ENCODE measurements at regions of chr4 and their contacts with region 1.

Region 1: GRCh38 chr4:153318696-153319320 is 25.7 kb upstream of the MND1 start:
- DNase-seq: no peak
- ATAC-seq: peak in 3 of 4 donors; percentile 74 to 77 (median 77)
- H3K4me3 ChIP-seq: no peak overlapping the region
- H3K27ac ChIP-seq: no peak overlapping the region
- H3K4me1 ChIP-seq: no peaks in the 10 kb centered on the region
- H3K27me3 ChIP-seq: no peaks in the 10 kb centered on the region
- CTCF ChIP-seq: peak; percentile 53 to 81 (median 74)
- POLR2A ChIP-seq: no peak

Region 2: DNA sequence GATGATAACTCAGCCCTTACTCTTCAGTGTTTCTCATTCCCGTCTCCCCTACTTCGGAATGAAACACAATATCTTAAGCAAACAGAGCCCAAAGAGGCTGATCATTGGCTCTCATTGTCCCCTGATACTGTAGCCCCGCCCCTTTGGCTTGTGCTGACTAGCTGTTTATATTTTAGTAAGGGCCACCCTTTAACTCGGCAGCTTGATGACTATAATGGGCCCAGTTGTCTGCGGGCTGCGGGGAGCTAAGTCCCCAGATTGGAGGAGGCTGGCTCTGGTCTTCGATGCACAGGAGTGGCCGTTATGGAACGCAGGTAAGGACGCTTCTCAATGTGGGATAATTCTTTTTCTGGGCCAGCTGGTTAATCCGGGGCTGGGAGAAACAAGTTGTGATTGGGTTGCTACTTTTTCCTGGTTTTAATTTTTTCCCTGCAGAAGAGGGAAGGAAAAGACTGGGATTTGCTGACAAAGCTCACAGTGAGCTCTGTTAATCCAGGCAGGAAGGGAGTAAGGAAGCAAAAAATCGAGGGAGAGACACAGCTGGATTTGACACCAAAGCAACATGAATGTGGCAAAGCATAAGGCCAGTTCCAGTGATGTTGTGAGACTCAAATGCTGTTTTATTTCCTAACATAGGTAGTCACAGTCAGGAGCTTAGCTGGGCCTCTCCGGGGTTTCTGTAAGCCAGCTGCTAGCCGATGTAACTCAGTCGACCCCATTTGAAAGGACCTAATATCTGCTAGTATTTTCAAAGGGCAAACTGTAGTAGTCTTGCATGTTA is 114.4 kb before region 1 on chr4 and contains the start of gene TRIM2:
- intact Hi-C with region 1: loop called (anchors 2 to 10 kb)
- DNase-seq: peak; percentile 67 to 82 (median 72)
- ATAC-seq: peak; percentile 84 to 95 (median 87)
- H3K4me3 ChIP-seq: peak within 1 kb of the TSS in 11 of 12 donors; percentile 3 to 60 (median 40)
- H3K27ac ChIP-seq: peak within 1 kb of the TSS in 6 of 12 donors; percentile 10 to 63 (median 36)
- H3K4me1 ChIP-seq: peaks cover 0 to 14% (median 0%) of the 10 kb centered on the region in 12 donors
- H3K27me3 ChIP-seq: no peaks in the 10 kb centered on the region
- CTCF ChIP-seq: no peak
- POLR2A ChIP-seq: peak in 1 of 2 donors; percentile 50
- total RNA-seq, gene TRIM2: 13.0 to 30.5 (median 19.0) TPM

Region 3: DNA sequence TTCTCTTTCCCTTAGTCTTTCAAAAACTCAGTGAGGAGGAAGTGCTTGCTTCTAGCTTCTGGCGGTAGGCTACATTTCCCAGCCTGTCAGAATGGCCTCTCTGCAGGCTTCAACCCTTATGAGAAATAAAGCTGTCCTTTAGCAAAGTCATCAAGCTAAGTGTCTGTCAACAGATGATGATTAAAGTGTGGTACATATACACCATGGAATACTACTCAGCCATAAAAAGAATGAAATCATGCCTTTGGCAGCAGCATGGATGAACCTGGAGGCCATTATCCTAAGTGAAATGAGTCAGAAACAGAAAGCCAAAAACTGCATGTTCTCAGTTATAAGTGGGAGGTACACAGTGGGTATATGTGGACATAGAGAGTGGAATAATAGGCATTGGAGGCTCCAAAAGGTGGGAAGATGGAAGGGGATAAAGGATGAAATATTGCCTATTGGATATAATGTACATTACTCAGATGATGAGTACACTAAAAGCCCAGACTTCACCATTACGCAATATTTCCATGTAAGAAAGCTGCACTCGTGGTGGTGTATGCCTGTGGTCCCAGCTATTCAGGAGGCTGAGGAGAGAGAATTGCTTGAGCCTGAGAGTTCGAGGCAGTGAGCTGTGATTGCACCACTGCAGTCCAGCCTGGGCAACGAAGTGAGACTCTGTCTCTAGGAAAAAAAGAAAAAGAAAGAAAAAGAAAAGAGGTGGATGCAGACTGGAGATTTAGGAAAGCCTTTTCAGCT is 106.7 kb before region 1 on chr4:
- intact Hi-C with region 1: loop called (anchors 2 to 10 kb)
- DNase-seq: no peak
- ATAC-seq: no peak
- H3K4me3 ChIP-seq: no peak overlapping the region
- H3K27ac ChIP-seq: no peak overlapping the region
- H3K4me1 ChIP-seq: peaks cover 0 to 41% (median 8%) of the 10 kb centered on the region in 12 donors
- H3K27me3 ChIP-seq: no peaks in the 10 kb centered on the region
- CTCF ChIP-seq: no peak
- POLR2A ChIP-seq: no peak

Region 4: DNA sequence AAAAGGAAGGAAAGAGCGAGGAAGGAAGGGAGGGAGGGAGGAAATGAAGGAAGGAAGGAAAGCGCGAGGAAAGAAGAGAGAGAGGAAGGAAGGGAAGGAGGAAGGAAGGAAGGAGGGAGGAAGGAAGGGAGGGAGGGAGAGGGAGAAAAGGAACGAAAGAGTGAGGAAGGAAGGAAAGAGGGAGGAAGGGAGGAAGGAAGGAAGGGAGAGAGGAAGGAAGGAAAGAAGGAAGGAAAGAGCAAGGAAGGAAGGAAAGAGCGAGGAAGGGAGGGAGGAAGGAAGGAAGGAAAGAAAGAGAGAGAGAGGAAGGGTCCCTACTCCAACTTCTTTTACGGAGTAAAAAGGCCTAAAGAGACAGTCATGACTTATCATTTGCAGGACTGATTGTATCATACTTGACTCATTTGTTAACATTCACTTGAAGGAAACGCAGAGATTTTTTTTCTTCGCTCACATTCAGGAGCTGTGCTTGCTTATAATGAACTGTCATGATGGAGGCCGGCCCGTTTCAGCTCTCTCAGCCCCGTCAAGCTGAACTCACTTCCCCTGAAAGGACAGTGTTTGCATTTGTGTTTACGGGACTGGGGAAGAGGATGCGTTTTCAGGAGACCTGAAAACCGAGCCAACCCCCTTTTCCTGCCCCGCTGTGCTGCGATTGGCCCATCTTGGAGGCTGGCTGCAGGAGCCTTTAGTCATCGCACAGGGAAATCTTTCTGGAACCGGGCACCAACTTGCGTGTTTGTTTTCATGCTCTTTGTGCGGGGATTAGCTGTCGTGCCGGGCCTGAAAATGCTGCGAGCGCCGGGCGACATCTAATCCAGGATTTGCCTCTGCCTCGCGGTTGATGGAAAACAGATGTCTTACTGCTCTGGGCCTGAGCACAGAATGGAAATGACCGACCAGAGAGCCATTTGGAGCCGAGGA is 96.8 kb before region 1 on chr4:
- intact Hi-C with region 1: loop called in 1 of 10 experiments (anchors 5 kb)
- DNase-seq: peak; percentile 36 to 76 (median 62)
- ATAC-seq: peak; percentile 34 to 74 (median 66)
- H3K4me3 ChIP-seq: peak overlapping the region; percentile 53 to 90 (median 76)
- H3K27ac ChIP-seq: peak overlapping the region; percentile 86 to 97 (median 92)
- H3K4me1 ChIP-seq: peaks cover 0 to 47% (median 15%) of the 10 kb centered on the region in 12 donors
- H3K27me3 ChIP-seq: no peaks in the 10 kb centered on the region
- CTCF ChIP-seq: no peak
- POLR2A ChIP-seq: peak in 1 of 2 donors; percentile 47

Region 5: DNA sequence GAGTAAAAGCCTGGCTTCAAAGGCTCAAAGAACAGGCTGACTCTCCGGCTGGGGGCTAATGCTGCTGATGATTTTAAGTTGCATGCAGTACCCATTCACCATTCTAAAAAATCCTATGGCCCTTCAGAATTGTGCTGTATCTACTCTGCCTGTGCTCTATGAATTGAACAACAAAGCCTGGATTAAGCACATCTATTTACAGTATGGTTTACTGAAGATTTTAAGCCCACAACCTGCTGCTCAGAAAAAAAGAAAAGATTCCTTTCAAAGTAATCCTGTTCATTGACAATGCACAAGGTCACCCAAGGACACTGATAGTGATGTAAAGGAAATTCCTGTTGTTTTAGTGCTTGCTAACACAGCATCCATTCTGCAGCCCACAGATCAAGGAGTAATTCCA is 554.9 kb after region 1 on chr4:
- intact Hi-C with region 1: no loop called
- DNase-seq: no peak
- ATAC-seq: no peak
- H3K4me3 ChIP-seq: no peak overlapping the region
- H3K27ac ChIP-seq: no peak overlapping the region
- H3K4me1 ChIP-seq: no peaks in the 10 kb centered on the region
- H3K27me3 ChIP-seq: no peaks in the 10 kb centered on the region
- CTCF ChIP-seq: no peak
- POLR2A ChIP-seq: no peak